Dorsolateral prefrontal cortex (tissue), 120 donors: ENCODE measurements at regions of chr12 and their contacts with region 1.

Region 1: GRCh38 chr12:22334410-22335290 is at the start of gene ST8SIA1:
- DNase-seq: peak in 8 of 10 donors; percentile 27 to 72 (median 53)
- H3K4me3 ChIP-seq: peak within 1 kb of the TSS; percentile 53 to 90 (median 76)
- H3K27ac ChIP-seq: peak within 1 kb of the TSS in 57 of 59 donors; percentile 50 to 93 (median 81)
- H3K27me3 ChIP-seq: peaks cover 0 to 5% (median 0%) of the 10 kb centered on the region in 45 donors
- CTCF ChIP-seq: no peak
- total RNA-seq, gene ST8SIA1: 23.7 to 85.9 (median 53.9) TPM

Region 2: DNA sequence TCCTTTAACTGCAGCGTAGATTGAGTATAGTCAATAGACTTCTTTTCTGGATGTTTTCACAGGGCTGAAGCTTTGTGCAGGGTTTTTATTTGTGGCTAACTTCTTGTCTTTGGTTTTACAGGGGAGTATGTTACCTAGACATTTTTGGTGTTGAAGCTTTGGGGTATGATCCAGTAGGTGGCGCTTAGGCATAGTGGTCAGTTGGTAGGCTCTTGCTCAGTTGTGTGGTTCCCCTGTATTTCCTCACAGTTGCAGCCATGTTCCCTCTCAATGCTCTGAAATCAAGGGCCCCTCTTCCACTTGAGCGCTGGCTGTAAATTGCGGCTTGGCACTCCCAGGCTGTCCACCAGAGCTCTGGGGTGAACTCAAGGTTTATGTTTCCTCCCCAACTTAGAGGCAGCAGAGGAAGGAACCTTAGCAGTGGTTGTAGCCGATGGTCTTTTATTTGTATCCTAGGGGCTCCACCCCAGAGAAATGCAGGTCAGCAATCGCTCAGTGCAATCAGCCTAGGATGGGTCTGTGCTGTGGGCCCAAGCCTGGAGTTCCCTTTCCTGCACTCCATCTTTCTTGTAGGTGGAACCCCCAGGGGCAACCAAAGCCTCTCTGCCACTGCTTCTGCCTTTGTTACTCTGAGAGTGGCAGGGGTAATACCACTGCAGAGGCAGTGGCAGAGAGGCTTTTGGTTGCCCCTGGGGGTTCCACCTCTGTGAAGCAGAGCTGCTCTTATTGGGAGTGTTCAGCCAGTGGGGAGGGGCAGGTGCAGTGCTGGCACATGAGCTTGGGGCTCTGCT is 233.5 kb before region 1 on chr12:
- intact Hi-C with region 1: loop called (anchors 5 kb)
- DNase-seq: no peak
- H3K4me3 ChIP-seq: no peak overlapping the region
- H3K27ac ChIP-seq: peak overlapping the region in 15 of 59 donors; percentile 7 to 59 (median 26)
- H3K27me3 ChIP-seq: no peaks in the 10 kb centered on the region
- CTCF ChIP-seq: peak in 52 of 56 donors; percentile 25 to 69 (median 50)

Region 3: DNA sequence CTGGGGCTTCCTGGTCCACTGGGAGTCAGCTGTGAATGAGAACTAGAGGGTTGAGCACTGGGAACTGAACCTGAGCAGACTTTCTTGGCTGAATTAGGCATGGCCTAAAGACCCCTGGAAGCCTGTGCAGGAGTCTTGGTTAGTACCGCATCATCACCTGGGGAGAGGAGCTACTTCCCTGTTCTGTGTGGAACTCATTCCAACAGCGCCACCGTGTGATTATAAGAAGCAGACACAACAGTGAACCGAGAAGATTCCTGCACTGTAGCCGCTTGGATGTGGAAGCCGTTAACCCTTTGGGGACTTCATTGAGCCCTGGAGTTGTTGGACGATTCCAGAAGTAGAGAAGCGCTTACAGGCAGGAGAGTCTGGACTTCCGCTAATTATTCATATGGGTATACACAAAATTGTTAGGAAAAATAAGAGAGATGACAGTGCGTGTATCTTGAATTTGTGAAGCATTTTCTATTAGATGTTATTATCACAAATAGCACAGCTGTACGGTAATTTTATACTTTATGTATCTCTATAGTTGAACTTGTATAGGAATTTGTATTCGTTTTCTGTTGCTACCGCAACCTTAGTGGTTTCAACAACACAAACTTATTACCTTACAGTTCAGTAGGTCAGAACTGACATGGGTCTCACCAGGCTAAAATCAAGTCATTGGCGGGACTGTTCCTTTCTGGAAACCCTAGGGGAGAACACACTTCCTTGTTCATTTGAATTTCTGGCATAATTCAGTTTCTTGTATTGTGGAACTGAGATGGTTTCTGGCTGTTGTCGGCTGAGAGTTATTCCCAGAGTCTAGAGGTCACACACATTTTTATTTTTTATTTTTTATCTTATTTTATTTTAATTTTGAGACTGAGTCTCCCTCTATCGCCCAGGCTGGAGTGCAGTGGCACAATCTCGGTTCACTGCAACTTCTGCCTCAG is 109.0 kb after region 1 on chr12:
- intact Hi-C with region 1: loop called (anchors 10 kb)
- DNase-seq: peak in 9 of 10 donors; percentile 43 to 69 (median 52)
- H3K4me3 ChIP-seq: no peak overlapping the region
- H3K27ac ChIP-seq: no peak overlapping the region
- H3K27me3 ChIP-seq: no peaks in the 10 kb centered on the region
- CTCF ChIP-seq: peak; percentile 30 to 85 (median 70)

Region 4: GRCh38 chr12:22729957-22730443 is 395.4 kb after region 1 on chr12:
- intact Hi-C with region 1: no loop called
- DNase-seq: no peak
- H3K4me3 ChIP-seq: peak overlapping the region in 1 of 59 donors; percentile 23
- H3K27ac ChIP-seq: peak overlapping the region in 32 of 59 donors; percentile 6 to 80 (median 38)
- H3K27me3 ChIP-seq: no peaks in the 10 kb centered on the region
- CTCF ChIP-seq: no peak